ENCODE measurements at regions of chr10 and their contacts with region 1.

Region 1: GRCh38 chr10:110746254-110746826 is 102.2 kb downstream of the RBM20 start:
- H3K4me3 ChIP-seq: no peak overlapping the region
- H3K27ac ChIP-seq: no peak overlapping the region
- H3K4me1 ChIP-seq: no peaks in the 10 kb centered on the region
- CTCF ChIP-seq: peak; percentile 71

Region 2: DNA sequence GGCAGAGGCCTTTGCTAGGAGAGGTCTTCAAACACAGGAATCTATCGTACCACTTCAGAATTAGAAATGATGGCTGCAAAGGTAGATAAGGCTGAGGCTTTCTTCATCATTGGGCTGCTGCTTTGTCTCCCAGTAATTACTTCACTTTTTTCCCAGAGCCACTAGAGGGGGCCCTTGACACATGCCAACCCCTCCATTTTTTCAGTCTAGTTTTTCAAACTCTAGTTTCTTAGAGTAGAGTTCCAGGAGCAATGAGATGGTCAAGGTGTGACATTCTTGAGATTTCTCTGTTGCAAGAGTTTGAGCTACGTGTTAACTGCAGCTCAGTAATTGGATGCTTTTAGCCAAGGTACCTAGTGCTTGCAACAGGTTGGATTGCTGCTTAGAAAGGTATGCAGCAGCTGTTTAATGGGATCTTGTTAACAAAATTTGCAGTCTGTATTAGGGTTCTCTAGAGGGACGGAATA is 136.0 kb before region 1 on chr10:
- CTCF ChIA-PET with region 1: interaction called, 14 read pairs
- POLR2A ChIA-PET with region 1: no interaction called
- H3K4me3 ChIP-seq: no peak overlapping the region
- H3K27ac ChIP-seq: no peak overlapping the region
- H3K4me1 ChIP-seq: peaks cover 18% of the 10 kb centered on the region
- CTCF ChIP-seq: peak; percentile 74

Region 3: DNA sequence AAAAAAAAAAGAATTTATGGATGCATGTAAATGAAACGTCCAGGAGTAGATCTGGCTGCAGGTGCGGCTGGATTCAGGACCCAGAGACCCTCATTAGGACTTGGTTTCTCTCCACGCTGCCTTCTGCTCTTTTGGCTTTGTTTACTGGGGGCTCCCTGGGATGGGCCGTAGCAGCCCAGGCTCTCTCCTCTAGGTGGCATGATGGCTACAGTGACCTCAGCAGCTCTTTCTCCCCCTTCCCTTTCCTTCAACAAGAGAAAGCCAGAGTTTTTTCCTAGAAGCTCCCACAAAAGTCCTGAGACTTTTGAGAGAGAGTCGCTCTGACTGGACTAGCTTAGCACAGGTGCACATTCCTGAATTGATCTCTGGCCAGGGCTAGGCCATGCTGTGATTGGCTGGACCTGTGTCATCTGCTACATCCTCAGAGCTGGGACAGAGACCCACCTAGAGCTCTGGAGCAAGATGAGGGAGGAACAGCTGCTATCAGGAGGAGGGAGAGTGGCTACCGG is 57.5 kb after region 1 on chr10:
- CTCF ChIA-PET with region 1: interaction called, 10 read pairs
- POLR2A ChIA-PET with region 1: no interaction called
- H3K4me3 ChIP-seq: no peak overlapping the region
- H3K27ac ChIP-seq: no peak overlapping the region
- H3K4me1 ChIP-seq: peaks cover 12% of the 10 kb centered on the region
- CTCF ChIP-seq: peak; percentile 58; the same call in 1 of the 2 replicates

Region 4: GRCh38 chr10:110893559-110894179 is 147.3 kb after region 1 on chr10:
- CTCF ChIA-PET with region 1: interaction called, 12 read pairs
- POLR2A ChIA-PET with region 1: no interaction called
- H3K4me3 ChIP-seq: no peak overlapping the region
- H3K27ac ChIP-seq: no peak overlapping the region
- H3K4me1 ChIP-seq: no peaks in the 10 kb centered on the region
- CTCF ChIP-seq: no peak

Region 5: GRCh38 chr10:111879969-111880368 is 1133.6 kb after region 1 on chr10:
- CTCF ChIA-PET with region 1: no interaction called
- POLR2A ChIA-PET with region 1: no interaction called
- H3K4me3 ChIP-seq: no peak overlapping the region
- H3K27ac ChIP-seq: no peak overlapping the region
- H3K4me1 ChIP-seq: no peaks in the 10 kb centered on the region
- CTCF ChIP-seq: no peak